HepG2 (cell line): ENCODE measurements at regions of chr2 and their contacts with region 1.

Region 1: DNA sequence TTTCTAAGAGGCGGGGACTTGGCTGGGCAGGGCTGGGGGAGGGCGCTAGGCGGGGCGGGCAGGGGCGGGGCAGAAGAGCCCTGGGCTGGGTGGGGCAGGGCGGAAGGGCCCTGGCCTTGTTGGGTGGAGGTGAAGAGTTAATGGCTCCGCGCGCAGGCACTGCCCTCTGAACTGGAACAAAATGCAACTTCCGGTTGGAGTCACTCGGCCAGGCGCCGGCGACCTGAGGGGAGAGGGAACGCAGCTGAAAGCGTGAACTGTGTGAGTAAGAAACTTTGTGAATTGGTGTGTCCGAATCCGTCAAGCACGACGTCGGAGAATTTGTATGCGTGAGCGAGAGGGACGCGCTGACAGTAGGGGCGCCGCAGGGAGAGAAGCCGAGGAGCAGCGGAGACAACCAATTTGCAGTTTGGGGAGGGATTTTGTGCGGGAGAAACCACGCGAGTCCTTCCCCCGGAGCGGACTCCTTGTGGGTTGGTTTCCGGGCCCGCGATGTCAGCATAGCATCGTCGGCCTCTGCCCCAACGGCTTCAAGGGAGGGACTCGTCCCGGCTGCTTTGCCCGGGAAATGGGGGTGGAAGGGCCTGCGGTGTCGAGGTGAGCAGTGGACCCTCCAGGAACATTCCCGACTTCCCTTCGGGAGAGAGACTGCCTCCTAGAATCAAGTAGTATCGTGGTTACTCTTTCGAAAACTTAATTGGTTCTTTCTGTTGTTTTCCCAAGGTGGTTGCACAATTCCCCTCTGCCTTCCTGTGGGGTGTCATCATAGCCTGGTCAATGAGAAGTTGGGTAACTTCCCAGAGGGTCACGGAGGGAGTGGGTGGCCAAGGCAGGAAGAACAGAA is at the start of gene TANK:
- DNase-seq: peak; percentile 99
- ATAC-seq: peak; percentile 96
- H3K4me3 ChIP-seq: peak within 1 kb of the TSS; percentile 90 to 100 (median 96)
- H3K27ac ChIP-seq: peak within 1 kb of the TSS; percentile 100
- H3K4me1 ChIP-seq: peaks cover 51% of the 10 kb centered on the region
- H3K27me3 ChIP-seq: peaks cover 0 to 5% of the 10 kb centered on the region in 2 experiments; a peak in 1 of 5 replicates
- CTCF ChIP-seq: no peak; the same call in 1 of the 2 replicates
- EP300 ChIP-seq: peak; percentile 97
- POLR2A ChIP-seq: peak; percentile 89 to 99
- RAD21 ChIP-seq: no peak
- total RNA-seq, gene TANK: 96.0 and 96.1 TPM in 2 replicates

Region 2: GRCh38 chr2:160125828-160126227 is 1034.6 kb before region 1 on chr2:
- CTCF ChIA-PET with region 1: no interaction called
- POLR2A ChIA-PET with region 1: no interaction called
- in situ Hi-C with region 1: no loop called
- intact Hi-C with region 1: no loop called
- DNase-seq: no peak
- ATAC-seq: no peak
- H3K4me3 ChIP-seq: no peak overlapping the region
- H3K27ac ChIP-seq: no peak overlapping the region
- H3K4me1 ChIP-seq: no peaks in the 10 kb centered on the region
- H3K27me3 ChIP-seq: no peaks in the 10 kb centered on the region
- CTCF ChIP-seq: no peak
- EP300 ChIP-seq: no peak
- POLR2A ChIP-seq: no peak
- RAD21 ChIP-seq: no peak

Region 3: DNA sequence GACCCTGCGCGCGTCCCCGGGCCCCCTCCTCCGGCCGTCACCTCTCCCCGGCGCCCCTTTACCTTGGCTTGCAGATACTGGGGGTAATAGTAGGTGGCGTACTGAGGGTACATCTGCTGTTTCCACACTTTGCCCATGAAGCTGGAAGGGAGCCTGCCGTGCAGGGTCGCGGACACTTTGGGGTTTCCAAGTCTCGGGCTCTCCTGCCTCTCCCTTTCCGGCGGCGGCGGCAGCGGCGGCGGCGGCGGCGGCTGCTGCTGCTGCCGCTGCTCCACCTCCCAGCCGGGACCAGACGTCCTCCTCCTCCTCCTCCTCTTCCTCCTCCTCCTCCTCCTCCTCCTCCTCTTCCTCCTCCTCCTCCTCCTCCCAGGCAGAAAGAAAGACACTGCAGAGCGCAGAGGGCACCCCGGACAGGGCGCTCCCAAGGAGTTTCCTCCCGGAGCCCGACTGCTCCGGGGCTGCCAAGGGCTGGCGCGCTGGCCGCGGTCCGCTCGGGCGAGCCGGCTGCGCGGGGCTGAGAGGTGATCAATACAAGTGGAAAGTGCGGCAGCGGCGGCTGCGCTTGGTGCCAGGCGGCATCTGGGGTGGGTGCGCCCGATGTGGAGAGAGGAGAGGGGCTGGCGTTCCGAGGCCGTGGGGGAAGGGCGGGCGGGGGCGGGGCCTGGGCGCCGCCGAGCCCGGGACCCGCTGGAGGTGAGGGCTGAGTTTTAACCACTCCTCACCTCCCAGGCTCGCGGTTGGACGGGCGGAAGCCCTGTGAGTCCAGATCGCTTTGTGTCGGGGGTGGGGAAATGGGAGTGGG is 667.0 kb before region 1 on chr2 and contains the start of gene RBMS1:
- CTCF ChIA-PET with region 1: no interaction called
- POLR2A ChIA-PET with region 1: no interaction called
- in situ Hi-C with region 1: no loop called
- intact Hi-C with region 1: loop called (anchors 1 kb)
- DNase-seq: peak; percentile 60
- ATAC-seq: peak; percentile 67
- H3K4me3 ChIP-seq: peak within 1 kb of the TSS; percentile 88 to 97 (median 95)
- H3K27ac ChIP-seq: peak within 1 kb of the TSS; percentile 96
- H3K4me1 ChIP-seq: peaks cover 32% of the 10 kb centered on the region
- H3K27me3 ChIP-seq: peaks cover 0 to 20% of the 10 kb centered on the region in 2 experiments; a peak in 3 of 5 replicates
- CTCF ChIP-seq: no peak
- EP300 ChIP-seq: no peak
- POLR2A ChIP-seq: peak in 1 of 2 experiments; percentile 79; a peak in 3 of 4 replicates
- RAD21 ChIP-seq: no peak
- total RNA-seq, gene RBMS1: 52.1 and 55.5 TPM in 2 replicates

Region 4: GRCh38 chr2:161063157-161063954 is 97.1 kb before region 1 on chr2:
- CTCF ChIA-PET with region 1: no interaction called
- POLR2A ChIA-PET with region 1: interaction called, 5 read pairs
- in situ Hi-C with region 1: no loop called
- intact Hi-C with region 1: loop called (anchors 1 kb)
- DNase-seq: peak; percentile 74
- ATAC-seq: peak; percentile 98
- H3K4me3 ChIP-seq: no peak overlapping the region
- H3K27ac ChIP-seq: no peak overlapping the region
- H3K4me1 ChIP-seq: peaks cover 8% of the 10 kb centered on the region; the same call in 1 of the 2 replicates
- H3K27me3 ChIP-seq: no peaks in the 10 kb centered on the region
- CTCF ChIP-seq: peak; percentile 91
- EP300 ChIP-seq: no peak
- POLR2A ChIP-seq: no peak
- RAD21 ChIP-seq: peak; percentile 62

Region 5: GRCh38 chr2:161115605-161116380 is 44.7 kb before region 1 on chr2:
- CTCF ChIA-PET with region 1: no interaction called
- POLR2A ChIA-PET with region 1: interaction called, 3 read pairs
- in situ Hi-C with region 1: no loop called
- intact Hi-C with region 1: loop called (anchors 1 kb)
- DNase-seq: peak; percentile 89
- ATAC-seq: peak; percentile 90
- H3K4me3 ChIP-seq: no peak overlapping the region; a peak in 1 of 6 replicates
- H3K27ac ChIP-seq: peak overlapping the region; percentile 1
- H3K4me1 ChIP-seq: peaks cover 39% of the 10 kb centered on the region
- H3K27me3 ChIP-seq: no peaks in the 10 kb centered on the region
- CTCF ChIP-seq: no peak
- EP300 ChIP-seq: peak in 1 of 2 experiments; percentile 96; a peak in 2 of 4 replicates
- POLR2A ChIP-seq: no peak
- RAD21 ChIP-seq: no peak

Region 6: GRCh38 chr2:161134547-161135518 is 25.6 kb before region 1 on chr2:
- CTCF ChIA-PET with region 1: no interaction called
- POLR2A ChIA-PET with region 1: interaction called, 4 read pairs
- in situ Hi-C with region 1: no loop called
- intact Hi-C with region 1: loop called (anchors 1 kb)
- DNase-seq: peak; percentile 66
- ATAC-seq: peak; percentile 92
- H3K4me3 ChIP-seq: peak overlapping the region in 2 of 3 experiments; percentile 4 to 36; a peak in 3 of 6 replicates
- H3K27ac ChIP-seq: no peak overlapping the region
- H3K4me1 ChIP-seq: peaks cover 25% of the 10 kb centered on the region
- H3K27me3 ChIP-seq: no peaks in the 10 kb centered on the region
- CTCF ChIP-seq: no peak
- EP300 ChIP-seq: peak in 1 of 2 experiments; percentile 44; a peak in 1 of 4 replicates
- POLR2A ChIP-seq: no peak
- RAD21 ChIP-seq: no peak

Region 7: GRCh38 chr2:161170377-161171310 is 10.2 kb after region 1 on chr2:
- CTCF ChIA-PET with region 1: no interaction called
- POLR2A ChIA-PET with region 1: interaction called, 4 read pairs
- in situ Hi-C with region 1: no loop called
- intact Hi-C with region 1: loop called (anchors 1 kb)
- DNase-seq: peak; percentile 6
- ATAC-seq: no peak
- H3K4me3 ChIP-seq: no peak overlapping the region
- H3K27ac ChIP-seq: no peak overlapping the region
- H3K4me1 ChIP-seq: peaks cover 63% of the 10 kb centered on the region
- H3K27me3 ChIP-seq: no peaks in the 10 kb centered on the region
- CTCF ChIP-seq: no peak
- EP300 ChIP-seq: no peak
- POLR2A ChIP-seq: no peak
- RAD21 ChIP-seq: no peak

Region 8: GRCh38 chr2:161190050-161190449 is 29.6 kb after region 1 on chr2:
- CTCF ChIA-PET with region 1: no interaction called
- POLR2A ChIA-PET with region 1: no interaction called
- in situ Hi-C with region 1: no loop called
- intact Hi-C with region 1: no loop called
- DNase-seq: no peak
- ATAC-seq: no peak
- H3K4me3 ChIP-seq: no peak overlapping the region
- H3K27ac ChIP-seq: no peak overlapping the region
- H3K4me1 ChIP-seq: no peaks in the 10 kb centered on the region
- H3K27me3 ChIP-seq: no peaks in the 10 kb centered on the region
- CTCF ChIP-seq: no peak
- EP300 ChIP-seq: no peak
- POLR2A ChIP-seq: no peak
- RAD21 ChIP-seq: no peak

Region 9: GRCh38 chr2:161308178-161308955 is 147.9 kb after region 1 on chr2 and contains the start of gene PSMD14:
- CTCF ChIA-PET with region 1: no interaction called
- POLR2A ChIA-PET with region 1: interaction called, 4 read pairs
- in situ Hi-C with region 1: no loop called
- intact Hi-C with region 1: loop called (anchors 1 kb)
- DNase-seq: peak; percentile 95
- ATAC-seq: peak; percentile 98
- H3K4me3 ChIP-seq: peak within 1 kb of the TSS; percentile 80 to 87 (median 82)
- H3K27ac ChIP-seq: peak within 1 kb of the TSS; percentile 88
- H3K4me1 ChIP-seq: peaks cover 26% of the 10 kb centered on the region
- H3K27me3 ChIP-seq: no peaks in the 10 kb centered on the region; a peak in 1 of 5 replicates
- CTCF ChIP-seq: peak; percentile 29; the same call in 1 of the 2 replicates
- EP300 ChIP-seq: no peak
- POLR2A ChIP-seq: peak; percentile 92 to 97
- RAD21 ChIP-seq: no peak
- total RNA-seq, gene PSMD14: 149 and 231 TPM in 2 replicates